ENCODE measurements at regions of chr2 and their contacts with region 1.

Region 1: DNA sequence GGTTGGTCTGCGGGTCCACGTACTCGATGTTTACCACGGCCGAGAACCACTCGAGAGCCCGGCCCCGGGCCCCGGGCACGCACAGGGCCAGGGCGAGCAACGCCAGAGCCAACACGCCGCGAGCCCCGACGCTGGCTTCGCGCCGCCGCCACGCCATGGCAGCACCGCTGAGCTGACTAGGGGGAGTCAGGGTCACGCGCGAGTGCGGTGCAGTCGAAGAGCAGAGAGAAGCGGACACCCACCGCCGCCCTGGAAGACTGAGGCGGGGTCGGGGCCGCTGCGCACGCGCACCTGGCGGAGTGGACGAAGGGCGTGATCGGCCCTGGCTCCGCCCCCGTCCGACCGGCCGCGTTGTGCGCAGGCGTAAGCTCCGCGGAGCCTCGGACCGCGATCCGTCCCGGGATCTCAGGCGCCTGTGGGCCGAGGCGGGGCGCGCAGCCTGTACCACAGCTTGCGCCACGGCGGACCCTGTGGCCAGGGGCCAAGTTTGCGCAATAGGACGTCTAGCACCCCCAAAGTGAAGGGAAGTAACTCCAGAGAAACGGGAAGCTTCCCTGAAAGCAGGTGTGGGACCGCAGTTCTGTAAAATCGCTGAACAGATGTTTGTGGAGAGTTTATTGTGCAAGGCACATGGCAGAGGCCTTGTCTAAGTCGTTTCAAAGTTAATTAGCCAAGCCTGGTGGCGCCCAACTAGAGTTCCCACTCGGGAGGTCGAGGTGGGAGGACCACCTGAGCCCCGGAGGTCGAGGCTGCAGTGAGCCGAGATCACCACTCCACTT is at the start of gene RNF149:
- DNase-seq: peak; percentile 98
- H3K4me3 Mint-ChIP-seq: peak within 1 kb of the TSS; percentile 88
- H3K27ac Mint-ChIP-seq: peak within 1 kb of the TSS; percentile 96
- H3K4me1 Mint-ChIP-seq: peaks cover 63% of the 10 kb centered on the region
- H3K27me3 Mint-ChIP-seq: no peaks in the 10 kb centered on the region
- total RNA-seq, gene RNF149: 40.3 and 40.7 TPM in 2 replicates

Region 2: DNA sequence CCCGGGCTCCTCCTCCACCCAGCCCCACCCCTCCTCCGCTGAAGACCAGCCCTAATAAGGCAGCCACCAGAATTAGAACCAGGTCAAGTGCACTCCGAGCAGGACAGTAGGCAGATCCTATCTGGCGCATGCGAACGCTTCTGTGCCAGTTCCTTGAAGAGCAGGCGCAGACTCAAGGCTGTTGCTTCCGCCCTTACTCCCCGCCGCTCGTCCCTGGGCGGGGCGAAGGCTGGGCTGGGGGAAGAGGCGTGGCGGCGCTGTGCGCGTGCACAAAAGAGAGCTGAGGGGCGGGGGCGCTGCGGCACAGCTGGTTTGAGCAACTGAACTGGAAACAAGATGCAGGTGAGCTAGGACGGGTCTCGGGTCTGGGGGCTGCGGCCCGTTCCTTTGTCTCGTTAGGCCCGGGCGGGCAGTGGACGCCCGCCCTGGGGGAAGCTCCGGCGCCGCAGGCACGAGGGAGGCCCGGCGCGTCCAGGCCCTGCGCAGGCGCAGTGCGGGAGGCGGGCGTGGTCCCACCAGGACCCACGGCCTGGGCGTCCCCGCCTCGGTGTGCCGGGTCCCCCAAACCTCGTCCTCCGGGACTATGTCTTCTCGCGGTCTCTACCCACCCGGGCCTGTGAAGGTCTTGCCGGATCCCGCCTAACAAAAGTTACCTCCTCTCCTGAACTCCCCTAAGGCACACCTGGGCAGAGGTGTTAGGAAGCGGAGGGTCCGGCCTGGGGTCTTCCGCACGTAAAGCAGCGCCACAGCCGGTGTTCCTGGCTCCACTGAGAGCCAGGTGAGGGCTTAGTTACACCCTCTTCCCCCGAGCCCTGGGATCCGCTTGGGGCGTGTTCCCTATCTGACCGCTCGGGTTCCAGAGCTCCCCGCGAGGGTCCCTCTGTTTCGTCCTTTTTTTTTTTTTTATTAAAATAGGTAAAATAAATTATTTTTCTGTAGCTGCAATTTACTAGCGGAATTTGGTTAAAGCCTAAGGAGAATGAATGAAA is 745.6 kb before region 1 on chr2 and contains the start of gene PDCL3:
- intact Hi-C with region 1: loop called (anchors 5 kb)
- DNase-seq: peak; percentile 99
- H3K4me3 Mint-ChIP-seq: peak within 1 kb of the TSS; percentile 99
- H3K27ac Mint-ChIP-seq: peak within 1 kb of the TSS; percentile 99
- H3K4me1 Mint-ChIP-seq: peaks cover 39% of the 10 kb centered on the region
- H3K27me3 Mint-ChIP-seq: no peaks in the 10 kb centered on the region
- total RNA-seq, gene PDCL3: 42.2 and 44.3 TPM in 2 replicates

Region 3: GRCh38 chr2:101151141-101151858 is 157.3 kb before region 1 on chr2 and contains the start of gene TBC1D8:
- intact Hi-C with region 1: loop called (anchors 5 kb)
- DNase-seq: peak; percentile 91
- H3K4me3 Mint-ChIP-seq: peak within 1 kb of the TSS; percentile 76
- H3K27ac Mint-ChIP-seq: peak within 1 kb of the TSS; percentile 48
- H3K4me1 Mint-ChIP-seq: peaks cover 17% of the 10 kb centered on the region
- H3K27me3 Mint-ChIP-seq: peaks cover 76% of the 10 kb centered on the region
- total RNA-seq, gene TBC1D8: 1.3 and 1.4 TPM in 2 replicates

Region 4: DNA sequence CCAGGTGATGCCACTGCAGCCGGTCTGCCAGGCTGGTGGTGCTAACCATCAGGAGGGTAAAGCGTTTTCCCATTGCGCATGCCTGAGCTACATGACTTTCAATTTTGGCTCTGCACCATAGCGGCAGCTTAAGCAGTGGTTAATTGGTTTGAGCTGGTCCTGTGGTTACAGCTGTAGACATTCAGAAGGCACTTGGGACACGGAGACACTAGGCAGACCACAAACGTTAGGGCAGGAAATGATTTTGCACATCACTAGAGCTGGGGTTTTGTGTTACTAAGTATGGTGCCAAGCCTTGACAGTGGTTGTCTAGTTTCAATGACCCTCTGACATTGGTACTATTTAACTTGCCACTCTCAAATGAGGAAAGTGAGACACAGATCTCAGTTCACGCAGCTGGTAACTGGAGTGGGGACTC is 84.8 kb before region 1 on chr2:
- intact Hi-C with region 1: no loop called
- DNase-seq: peak; percentile 84
- H3K4me3 Mint-ChIP-seq: peak overlapping the region; percentile 13
- H3K27ac Mint-ChIP-seq: peak overlapping the region; percentile 51
- H3K4me1 Mint-ChIP-seq: peaks cover 13% of the 10 kb centered on the region
- H3K27me3 Mint-ChIP-seq: no peaks in the 10 kb centered on the region

Region 5: DNA sequence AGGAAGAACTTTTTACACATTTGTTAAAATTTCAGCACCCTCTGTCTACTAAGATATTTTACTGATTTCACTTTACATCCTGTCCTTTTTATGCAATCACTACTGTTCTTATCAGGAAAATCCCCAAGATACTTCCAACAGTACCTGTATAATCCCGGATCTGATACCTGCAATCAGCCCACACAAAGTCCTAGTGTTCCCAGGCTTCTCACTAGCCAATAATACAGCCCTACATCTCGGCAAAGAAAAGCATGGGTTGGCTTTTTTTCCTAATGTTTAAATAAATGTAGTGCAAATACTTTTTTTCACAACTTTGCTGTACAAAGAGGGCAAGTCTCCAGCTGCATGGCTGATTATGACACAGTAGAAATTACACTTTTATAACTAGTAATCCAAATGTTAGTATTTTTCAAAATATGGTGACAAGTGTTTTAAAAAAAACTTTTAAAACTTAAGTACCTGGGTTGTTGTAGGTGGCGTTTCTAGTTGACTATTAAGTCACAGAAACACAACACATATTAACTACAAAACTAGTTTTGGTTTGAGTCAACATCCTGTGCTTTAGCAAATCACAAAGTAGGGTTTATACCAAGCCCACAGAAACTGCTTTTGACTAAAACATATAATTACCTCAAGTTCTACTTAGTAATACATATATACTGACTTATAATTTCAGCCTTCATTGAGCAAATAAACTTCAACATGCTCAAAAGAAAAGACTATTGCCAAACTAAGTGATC is 36.4 kb before region 1 on chr2:
- intact Hi-C with region 1: loop called (anchors 1 kb)
- DNase-seq: peak; percentile 69
- H3K4me3 Mint-ChIP-seq: peak overlapping the region; percentile 55
- H3K27ac Mint-ChIP-seq: peak overlapping the region; percentile 83
- H3K4me1 Mint-ChIP-seq: peaks cover 35% of the 10 kb centered on the region
- H3K27me3 Mint-ChIP-seq: no peaks in the 10 kb centered on the region

Region 6: GRCh38 chr2:101341901-101342624 is 33.4 kb after region 1 on chr2:
- intact Hi-C with region 1: loop called (anchors 5 kb)
- DNase-seq: peak; percentile 91
- H3K4me3 Mint-ChIP-seq: no peak overlapping the region
- H3K27ac Mint-ChIP-seq: peak overlapping the region; percentile 52
- H3K4me1 Mint-ChIP-seq: peaks cover 26% of the 10 kb centered on the region
- H3K27me3 Mint-ChIP-seq: peaks cover 5% of the 10 kb centered on the region

Region 7: DNA sequence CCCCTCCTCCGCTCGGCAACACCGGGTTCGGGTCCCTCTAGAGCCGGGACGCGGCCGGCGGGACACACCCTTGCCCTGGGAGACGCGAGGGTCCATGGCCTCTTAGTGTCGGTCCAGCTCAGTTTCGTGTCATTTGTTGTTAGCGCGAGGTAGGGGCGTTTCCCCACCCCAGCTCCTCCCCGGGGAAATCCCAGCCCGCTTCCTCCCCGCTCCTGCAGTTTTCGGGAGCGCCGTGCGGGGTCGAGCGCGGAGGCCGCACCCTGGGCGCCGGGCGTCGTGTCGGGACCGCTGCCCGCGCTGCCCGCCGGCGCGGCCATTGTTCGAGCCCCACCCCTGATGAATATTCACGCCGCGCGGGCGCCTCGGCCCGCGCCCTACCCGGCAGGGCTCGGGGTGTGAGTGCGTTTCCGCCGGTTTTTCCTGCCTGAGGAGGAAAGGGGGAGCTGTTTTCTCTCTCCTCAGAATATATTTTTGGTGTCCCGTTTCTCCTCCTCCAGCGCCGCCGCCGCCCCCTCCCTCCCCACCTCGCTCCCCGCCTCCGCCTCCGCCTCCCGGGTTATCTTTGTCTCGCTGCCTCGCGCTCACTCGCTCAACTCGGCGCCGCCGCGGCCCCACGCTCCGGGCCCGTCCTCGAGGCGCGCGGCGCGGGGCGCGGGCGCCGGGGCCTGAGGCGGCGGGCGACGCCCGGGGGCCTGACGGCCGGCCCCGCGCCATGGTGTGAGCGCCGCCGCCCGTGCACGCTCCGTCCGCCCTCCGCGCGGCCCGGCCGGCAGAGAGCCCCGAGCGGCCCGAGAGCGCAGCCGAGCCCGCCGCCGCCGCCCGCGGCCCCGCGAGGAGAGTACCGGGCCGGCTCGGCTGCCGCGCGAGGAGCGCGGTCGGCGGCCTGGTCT is 388.7 kb after region 1 on chr2 and contains the start of gene MAP4K4:
- intact Hi-C with region 1: loop called (anchors 5 kb)
- DNase-seq: peak; percentile 91
- H3K4me3 Mint-ChIP-seq: peak within 1 kb of the TSS; percentile 85
- H3K27ac Mint-ChIP-seq: peak within 1 kb of the TSS; percentile 88
- H3K4me1 Mint-ChIP-seq: peaks cover 22% of the 10 kb centered on the region
- H3K27me3 Mint-ChIP-seq: no peaks in the 10 kb centered on the region
- total RNA-seq, gene MAP4K4: 41.2 and 42.6 TPM in 2 replicates

Measured in activated CD4-positive, alpha-beta T cell treated with anti-CD3 and anti-CD28 coated beads, Interleukin-2, amount 10 ng/mL, durations not matched to agents 24 days and 14 days (primary cell).